Activated B cell treated with CpG ODN at 0.5 μM for 24 hours (primary cell): ENCODE measurements at regions of chr13 and their contacts with region 1.

Region 1: GRCh38 chr13:49996951-49997895 is at the start of gene TRIM13:
- DNase-seq: peak; percentile 82
- ATAC-seq: peak; percentile 72
- H3K4me3 Mint-ChIP-seq: peak within 1 kb of the TSS; percentile 88
- H3K27ac Mint-ChIP-seq: peak within 1 kb of the TSS; percentile 93
- H3K4me1 Mint-ChIP-seq: peaks cover 54% of the 10 kb centered on the region
- H3K27me3 Mint-ChIP-seq: no peaks in the 10 kb centered on the region
- CTCF ChIP-seq: peak; percentile 49
- total RNA-seq, gene TRIM13: 49.3 and 54.4 TPM in 2 replicates

Region 2: DNA sequence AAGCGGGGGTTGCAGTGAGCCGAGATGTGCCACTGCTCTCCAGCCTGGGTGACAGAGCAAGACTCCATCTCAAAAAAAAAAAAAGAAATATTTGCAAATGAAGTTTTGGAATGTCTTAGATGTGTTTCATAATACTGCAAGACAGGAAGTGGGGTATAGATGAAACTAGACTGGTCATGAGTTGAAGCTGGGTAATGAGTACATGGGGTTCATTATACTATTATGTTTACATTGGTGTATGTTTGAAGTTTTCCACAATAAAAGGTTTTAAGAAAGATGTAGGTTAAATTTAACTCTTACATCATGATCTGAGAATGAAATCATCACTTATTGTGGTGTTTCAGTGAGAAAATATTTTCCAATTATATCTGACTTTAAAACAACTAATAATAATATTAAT is 1002.5 kb before region 1 on chr13:
- CTCF ChIA-PET with region 1: no interaction called
- POLR2A ChIA-PET with region 1: no interaction called
- intact Hi-C with region 1: no loop called
- DNase-seq: no peak
- ATAC-seq: no peak
- H3K4me3 Mint-ChIP-seq: no peak overlapping the region
- H3K27ac Mint-ChIP-seq: no peak overlapping the region
- H3K4me1 Mint-ChIP-seq: peaks cover 12% of the 10 kb centered on the region
- H3K27me3 Mint-ChIP-seq: no peaks in the 10 kb centered on the region
- CTCF ChIP-seq: no peak

Region 3: DNA sequence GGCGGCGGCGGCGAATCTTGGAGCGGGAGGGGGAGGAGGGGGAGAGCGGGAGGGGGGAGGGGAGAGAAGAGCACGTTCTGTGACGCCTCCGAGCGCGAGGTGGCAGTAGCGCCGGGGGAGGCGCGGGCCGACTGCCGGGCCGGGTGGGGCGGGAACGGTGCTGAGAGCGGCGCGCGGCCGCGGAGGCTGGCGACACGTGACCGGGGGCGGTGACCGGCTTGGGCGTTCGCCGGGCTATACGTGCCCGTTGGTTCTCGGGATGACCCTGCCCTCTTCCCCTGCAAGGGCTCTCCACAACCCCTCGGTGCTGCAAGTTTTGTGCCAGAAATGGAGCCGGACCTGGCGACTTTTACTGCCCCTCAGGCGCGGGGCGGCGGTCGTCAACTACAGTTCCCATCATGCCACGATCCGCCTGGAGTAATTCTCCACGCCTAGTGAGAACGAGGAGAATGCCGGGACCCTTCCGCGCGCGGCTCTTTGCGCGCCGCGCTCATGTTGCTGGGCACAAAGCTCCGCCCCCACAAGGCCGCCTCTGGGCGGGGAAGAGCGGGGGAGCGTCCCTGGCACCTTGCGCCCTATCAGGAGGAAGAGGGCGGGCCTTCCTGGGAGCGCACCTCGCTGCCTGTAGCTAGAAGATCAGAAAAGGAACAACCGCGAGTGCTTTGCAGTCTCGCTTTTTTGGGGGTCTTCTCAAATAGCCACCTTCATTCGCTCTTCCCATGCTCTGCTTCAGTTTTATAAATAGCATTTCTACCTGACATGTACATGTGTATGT is 204.5 kb before region 1 on chr13 and contains the start of gene KPNA3:
- CTCF ChIA-PET with region 1: no interaction called
- POLR2A ChIA-PET with region 1: interaction called, 10 read pairs
- intact Hi-C with region 1: no loop called
- DNase-seq: peak; percentile 88
- ATAC-seq: peak; percentile 89
- H3K4me3 Mint-ChIP-seq: peak within 1 kb of the TSS; percentile 97
- H3K27ac Mint-ChIP-seq: peak within 1 kb of the TSS; percentile 97
- H3K4me1 Mint-ChIP-seq: peaks cover 31% of the 10 kb centered on the region
- H3K27me3 Mint-ChIP-seq: no peaks in the 10 kb centered on the region
- CTCF ChIP-seq: no peak
- total RNA-seq, gene KPNA3: 28.6 and 28.7 TPM in 2 replicates

Region 4: DNA sequence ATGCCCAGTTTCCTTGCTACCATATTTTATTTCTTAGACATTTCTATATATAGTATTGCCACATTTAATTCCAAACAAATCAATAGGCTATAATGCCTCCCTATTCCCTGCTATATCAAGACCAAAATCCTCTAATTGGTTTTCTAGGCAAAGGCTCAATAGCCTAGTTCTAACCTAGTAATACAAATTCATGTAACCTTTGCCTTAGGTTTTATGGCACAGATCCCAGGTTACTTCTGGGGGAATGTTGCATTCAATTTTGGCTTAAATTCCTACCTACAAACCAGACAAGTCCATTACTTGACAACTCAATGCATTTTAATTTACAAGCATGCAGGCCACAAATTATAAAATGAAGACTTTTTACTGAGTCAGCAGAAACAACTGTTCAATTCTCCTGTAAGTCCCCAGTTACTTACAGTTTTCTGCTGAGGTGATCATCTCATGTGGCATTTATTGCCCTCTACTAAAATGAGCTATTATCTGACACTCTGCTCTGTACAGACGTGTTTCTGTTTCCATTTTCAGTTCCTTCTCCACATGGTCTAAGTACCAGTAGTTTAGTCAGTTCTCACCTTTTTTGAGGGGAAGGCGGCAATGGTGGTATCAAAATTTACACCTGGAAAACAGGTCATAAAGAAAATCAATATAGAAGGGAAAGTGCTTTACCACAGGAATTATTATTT is 29.7 kb after region 1 on chr13:
- CTCF ChIA-PET with region 1: no interaction called
- POLR2A ChIA-PET with region 1: interaction called, 20 read pairs
- intact Hi-C with region 1: loop called (anchors 5 kb)
- DNase-seq: no peak
- ATAC-seq: peak; percentile 98
- H3K4me3 Mint-ChIP-seq: no peak overlapping the region
- H3K27ac Mint-ChIP-seq: peak overlapping the region; percentile 69
- H3K4me1 Mint-ChIP-seq: peaks cover 24% of the 10 kb centered on the region
- H3K27me3 Mint-ChIP-seq: no peaks in the 10 kb centered on the region
- CTCF ChIP-seq: no peak

Region 5: DNA sequence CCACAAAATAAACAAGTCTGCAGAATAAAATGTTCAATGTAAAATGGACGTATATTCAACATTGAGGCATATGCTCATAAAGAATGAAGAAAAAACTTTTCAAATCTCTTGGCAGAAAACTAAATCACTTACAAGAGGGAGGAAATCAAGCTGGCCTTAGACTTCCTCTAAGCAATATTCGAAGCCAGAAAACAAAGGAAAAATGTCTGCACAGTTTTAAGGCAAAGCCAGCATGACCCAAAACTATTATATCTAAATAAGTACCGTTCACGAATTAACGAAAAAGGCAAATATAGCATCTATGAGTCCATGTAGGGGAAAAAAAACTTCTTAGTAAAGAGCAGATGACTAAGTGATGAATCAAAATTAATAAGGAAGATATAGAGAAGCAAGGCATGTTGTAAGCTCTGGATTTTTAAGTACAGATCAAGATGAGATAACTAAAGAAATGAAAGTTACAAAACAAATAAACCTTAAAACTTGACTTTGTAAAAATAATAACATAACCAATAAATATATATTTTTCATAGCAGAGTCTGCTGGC is 119.3 kb after region 1 on chr13:
- CTCF ChIA-PET with region 1: interaction called, 3 read pairs
- POLR2A ChIA-PET with region 1: interaction called, 271 read pairs
- intact Hi-C with region 1: no loop called
- DNase-seq: no peak
- ATAC-seq: no peak
- H3K4me3 Mint-ChIP-seq: no peak overlapping the region
- H3K27ac Mint-ChIP-seq: peak overlapping the region; percentile 46
- H3K4me1 Mint-ChIP-seq: peaks cover 33% of the 10 kb centered on the region
- H3K27me3 Mint-ChIP-seq: no peaks in the 10 kb centered on the region
- CTCF ChIP-seq: no peak

Region 6: GRCh38 chr13:50365408-50366391 is 368.5 kb after region 1 on chr13:
- CTCF ChIA-PET with region 1: interaction called, 4 read pairs
- POLR2A ChIA-PET with region 1: interaction called, 12 read pairs
- intact Hi-C with region 1: loop called (anchors 2 kb)
- DNase-seq: no peak
- ATAC-seq: peak; percentile 28
- H3K4me3 Mint-ChIP-seq: peak overlapping the region; percentile 63
- H3K27ac Mint-ChIP-seq: peak overlapping the region; percentile 86
- H3K4me1 Mint-ChIP-seq: peaks cover 57% of the 10 kb centered on the region
- H3K27me3 Mint-ChIP-seq: no peaks in the 10 kb centered on the region
- CTCF ChIP-seq: no peak

Region 7: GRCh38 chr13:50594276-50595051 is 597.2 kb after region 1 on chr13:
- CTCF ChIA-PET with region 1: interaction called, 3 read pairs
- POLR2A ChIA-PET with region 1: interaction called, 18 read pairs
- intact Hi-C with region 1: loop called (anchors 2 kb)
- DNase-seq: peak; percentile 76
- ATAC-seq: peak; percentile 88
- H3K4me3 Mint-ChIP-seq: peak overlapping the region; percentile 73
- H3K27ac Mint-ChIP-seq: peak overlapping the region; percentile 98
- H3K4me1 Mint-ChIP-seq: peaks cover 95% of the 10 kb centered on the region
- H3K27me3 Mint-ChIP-seq: no peaks in the 10 kb centered on the region
- CTCF ChIP-seq: no peak

Region 8: GRCh38 chr13:50893211-50893852 is 896.1 kb after region 1 on chr13:
- CTCF ChIA-PET with region 1: interaction called, 4 read pairs
- POLR2A ChIA-PET with region 1: interaction called, 4 read pairs
- intact Hi-C with region 1: loop called (anchors 5 kb)
- DNase-seq: no peak
- ATAC-seq: peak; percentile 79
- H3K4me3 Mint-ChIP-seq: peak overlapping the region; percentile 78
- H3K27ac Mint-ChIP-seq: peak overlapping the region; percentile 96
- H3K4me1 Mint-ChIP-seq: peaks cover 65% of the 10 kb centered on the region
- H3K27me3 Mint-ChIP-seq: no peaks in the 10 kb centered on the region
- CTCF ChIP-seq: no peak